H1 (cell line): ENCODE measurements at regions of chr4 and their contacts with region 1.

Region 1: DNA sequence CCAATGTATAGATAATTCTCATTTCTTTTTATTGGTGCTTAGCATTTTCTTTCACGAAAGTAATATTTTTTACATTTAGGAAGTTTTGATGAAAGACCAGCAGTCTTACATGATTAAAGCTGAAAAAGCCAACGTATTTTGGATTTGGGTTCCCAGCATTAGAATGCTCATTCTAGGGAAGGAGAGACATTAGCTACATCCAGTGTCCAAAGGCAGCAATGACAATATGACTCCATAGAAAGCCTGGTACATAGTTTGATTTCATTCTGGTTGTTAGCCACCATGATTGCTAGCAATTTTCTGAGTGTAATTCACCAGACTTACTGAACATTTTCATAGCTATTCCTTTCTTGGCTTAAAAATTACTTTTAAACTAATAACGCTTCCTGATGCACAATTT is 1397.5 kb downstream of the PCDH7 start:
- DNase-seq: no peak
- H3K4me3 ChIP-seq: no peak overlapping the region
- H3K27ac ChIP-seq: no peak overlapping the region
- H3K4me1 ChIP-seq: no peaks in the 10 kb centered on the region
- H3K27me3 ChIP-seq: no peaks in the 10 kb centered on the region
- CTCF ChIP-seq: peak in 1 of 3 experiments; percentile 21; a peak in 1 of 4 replicates
- EP300 ChIP-seq: no peak
- POLR2A ChIP-seq: no peak
- RAD21 ChIP-seq: peak; percentile 48 to 51

Region 2: GRCh38 chr4:32106767-32107166 is 10.9 kb before region 1 on chr4:
- CTCF ChIA-PET with region 1: interaction called, 10 read pairs
- POLR2A ChIA-PET with region 1: interaction called, 3 read pairs
- DNase-seq: no peak
- H3K4me3 ChIP-seq: no peak overlapping the region
- H3K27ac ChIP-seq: no peak overlapping the region
- H3K4me1 ChIP-seq: no peaks in the 10 kb centered on the region
- H3K27me3 ChIP-seq: no peaks in the 10 kb centered on the region
- CTCF ChIP-seq: no peak
- EP300 ChIP-seq: no peak
- POLR2A ChIP-seq: no peak
- RAD21 ChIP-seq: no peak

Region 3: DNA sequence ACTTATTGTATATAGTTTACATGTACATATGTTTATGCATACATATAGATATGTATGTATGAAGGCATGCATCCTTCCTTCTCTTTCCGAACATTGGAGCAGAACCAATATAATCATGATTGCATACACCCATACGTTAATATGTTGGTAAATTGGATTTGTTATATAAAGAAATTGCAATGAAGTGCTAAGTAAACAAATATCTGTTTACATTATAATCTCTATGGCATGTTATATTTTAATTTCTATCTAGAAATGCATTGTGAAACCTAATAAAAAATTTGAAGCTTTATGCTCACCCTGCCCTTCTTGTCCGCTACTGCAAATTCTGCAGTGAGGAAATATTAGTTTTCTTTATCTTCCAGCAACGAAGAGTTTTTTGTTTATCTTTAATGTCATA is 288.1 kb after region 1 on chr4:
- CTCF ChIA-PET with region 1: no interaction called
- POLR2A ChIA-PET with region 1: no interaction called
- DNase-seq: no peak
- H3K4me3 ChIP-seq: no peak overlapping the region
- H3K27ac ChIP-seq: no peak overlapping the region
- H3K4me1 ChIP-seq: no peaks in the 10 kb centered on the region
- H3K27me3 ChIP-seq: no peaks in the 10 kb centered on the region
- CTCF ChIP-seq: no peak
- EP300 ChIP-seq: no peak
- POLR2A ChIP-seq: no peak
- RAD21 ChIP-seq: no peak